Right cardiac atrium (tissue), 5 donors: ENCODE measurements at regions of chr3 and their contacts with region 1.

Region 1: GRCh38 chr3:4950351-4950784 is 28.9 kb upstream of the BHLHE40 start:
- DNase-seq: peak in 2 of 3 donors; percentile 31 to 65
- ATAC-seq: peak; percentile 76 to 78
- H3K4me3 ChIP-seq: no peak overlapping the region
- H3K27ac ChIP-seq: no peak overlapping the region
- H3K4me1 ChIP-seq: no peaks in the 10 kb centered on the region
- H3K27me3 ChIP-seq: no peaks in the 10 kb centered on the region

Region 2: DNA sequence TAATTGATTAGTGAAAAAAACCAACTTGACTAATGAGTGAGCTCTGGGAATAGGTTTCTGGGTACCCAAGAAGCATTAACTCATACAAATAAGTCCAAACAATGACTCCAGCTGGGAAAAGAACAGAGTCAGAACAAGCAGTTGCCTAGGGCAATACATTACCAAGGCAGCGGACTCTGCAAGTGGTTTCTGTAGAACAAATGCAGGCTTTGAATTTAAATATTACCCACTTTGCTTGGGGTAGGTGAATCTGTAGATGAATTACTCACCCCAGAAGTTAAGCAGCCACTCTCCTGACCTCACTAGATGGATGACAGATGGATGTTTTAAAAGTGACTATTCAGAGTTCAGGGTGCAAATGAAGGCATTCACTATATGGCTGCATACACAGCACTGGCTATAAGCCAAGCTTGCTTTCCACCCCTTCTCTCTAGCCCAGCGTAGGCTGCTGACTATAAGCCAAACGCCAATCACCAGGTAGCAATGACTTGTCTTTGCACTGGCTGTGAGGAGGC is 44.2 kb before region 1 on chr3:
- intact Hi-C with region 1: loop called in 1 of 4 experiments (anchors 10 kb)
- DNase-seq: no peak
- ATAC-seq: no peak
- H3K4me3 ChIP-seq: no peak overlapping the region
- H3K27ac ChIP-seq: no peak overlapping the region
- H3K4me1 ChIP-seq: peaks cover under 1% of the 10 kb centered on the region
- H3K27me3 ChIP-seq: no peaks in the 10 kb centered on the region